ENCODE measurements at regions of chr7 and their contacts with region 1.

Region 1: GRCh38 chr7:140326116-140326928 is 72.0 kb downstream of the SLC37A3 start:
- DNase-seq: peak in 1 of 2 experiments; percentile 67
- H3K4me3 ChIP-seq: no peak overlapping the region
- H3K27ac ChIP-seq: no peak overlapping the region
- H3K4me1 ChIP-seq: no peaks in the 10 kb centered on the region
- H3K27me3 ChIP-seq: no peaks in the 10 kb centered on the region
- CTCF ChIP-seq: peak; percentile 78

Region 2: DNA sequence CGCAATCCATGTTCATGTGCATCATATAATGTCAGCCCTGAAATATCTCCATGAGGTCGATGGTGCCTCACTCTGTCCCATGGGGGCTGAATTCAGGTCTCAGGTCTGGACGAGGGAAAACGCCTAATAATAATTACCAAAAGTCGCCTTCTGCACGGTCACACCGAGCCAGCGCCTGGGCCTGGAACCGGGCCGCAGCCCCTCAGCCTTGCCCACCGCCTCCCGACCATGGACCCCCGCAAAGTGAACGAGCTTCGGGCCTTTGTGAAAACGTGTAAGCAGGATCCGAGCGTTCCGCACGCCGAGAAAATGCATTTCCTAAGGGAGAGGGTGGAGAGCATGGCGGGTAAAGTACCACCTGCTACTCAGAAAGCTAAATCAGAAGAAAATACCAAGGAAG is 824.1 kb before region 1 on chr7:
- CTCF ChIA-PET with region 1: no interaction called
- POLR2A ChIA-PET with region 1: no interaction called
- intact Hi-C with region 1: loop called (anchors 1 kb)
- DNase-seq: no peak
- H3K4me3 ChIP-seq: no peak overlapping the region
- H3K27ac ChIP-seq: no peak overlapping the region
- H3K4me1 ChIP-seq: no peaks in the 10 kb centered on the region
- H3K27me3 ChIP-seq: no peaks in the 10 kb centered on the region
- CTCF ChIP-seq: no peak

Region 3: GRCh38 chr7:139620676-139621344 is 705.5 kb before region 1 on chr7:
- CTCF ChIA-PET with region 1: no interaction called
- POLR2A ChIA-PET with region 1: no interaction called
- intact Hi-C with region 1: loop called (anchors 5 kb)
- DNase-seq: peak; percentile 55 to 65
- H3K4me3 ChIP-seq: no peak overlapping the region
- H3K27ac ChIP-seq: no peak overlapping the region
- H3K4me1 ChIP-seq: no peaks in the 10 kb centered on the region
- H3K27me3 ChIP-seq: no peaks in the 10 kb centered on the region
- CTCF ChIP-seq: peak; percentile 89

Region 4: DNA sequence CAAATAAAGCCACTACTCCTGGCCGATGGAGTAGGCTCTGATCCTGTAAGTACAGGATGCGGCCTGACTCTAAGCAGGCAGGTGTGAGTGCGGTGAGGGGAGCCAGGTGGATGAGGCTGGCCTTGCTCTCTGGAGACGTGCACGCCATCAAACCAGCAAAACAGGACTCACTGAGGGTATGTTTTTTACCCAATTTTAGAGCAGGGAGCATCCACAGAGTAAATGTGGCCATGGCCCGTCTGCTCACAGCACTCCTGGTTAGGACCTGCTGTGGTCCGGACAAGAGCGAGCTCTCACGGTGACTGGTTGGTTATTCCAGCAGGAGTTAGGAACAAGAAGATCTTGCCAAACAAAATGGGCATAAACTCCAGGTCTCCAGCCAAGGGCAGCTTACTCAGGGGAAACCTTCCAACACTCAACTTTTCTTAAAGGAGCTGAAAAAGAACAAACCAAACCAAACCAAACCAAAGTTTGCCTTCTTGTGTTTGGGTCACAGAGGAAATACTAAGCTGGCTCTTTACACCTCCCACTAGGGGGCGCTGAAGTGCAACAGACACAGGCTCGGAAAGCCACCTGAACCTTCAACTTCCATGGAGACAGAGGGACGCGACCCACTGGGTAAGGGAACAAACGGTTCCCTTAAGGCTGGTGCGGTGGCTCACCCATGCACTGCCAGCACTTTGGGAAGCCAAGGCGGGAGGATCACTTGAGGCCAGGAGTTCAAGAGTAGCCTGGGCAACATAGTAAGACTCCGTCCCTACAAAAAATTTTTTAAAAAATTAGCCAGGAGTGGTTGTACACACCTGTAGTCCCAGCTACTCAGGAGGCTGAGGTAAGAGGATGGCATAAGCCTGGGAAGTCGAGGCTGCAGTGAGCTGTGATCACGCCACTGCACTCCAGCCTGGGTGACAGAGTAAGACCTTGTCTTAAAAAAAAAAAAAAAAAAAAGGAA is 680.5 kb before region 1 on chr7:
- CTCF ChIA-PET with region 1: no interaction called
- POLR2A ChIA-PET with region 1: no interaction called
- intact Hi-C with region 1: loop called (anchors 1 kb)
- DNase-seq: peak; percentile 56 to 73
- H3K4me3 ChIP-seq: no peak overlapping the region
- H3K27ac ChIP-seq: no peak overlapping the region
- H3K4me1 ChIP-seq: no peaks in the 10 kb centered on the region
- H3K27me3 ChIP-seq: no peaks in the 10 kb centered on the region
- CTCF ChIP-seq: peak; percentile 98

Region 5: GRCh38 chr7:139777948-139778841 is 548.1 kb before region 1 on chr7 and contains the start of gene HIPK2:
- CTCF ChIA-PET with region 1: no interaction called
- POLR2A ChIA-PET with region 1: no interaction called
- intact Hi-C with region 1: loop called (anchors 10 kb)
- DNase-seq: peak in 1 of 2 experiments; percentile 64
- H3K4me3 ChIP-seq: peak within 1 kb of the TSS; percentile 90
- H3K27ac ChIP-seq: peak within 1 kb of the TSS; percentile 45
- H3K4me1 ChIP-seq: peaks cover 39% of the 10 kb centered on the region
- H3K27me3 ChIP-seq: no peaks in the 10 kb centered on the region
- CTCF ChIP-seq: no peak
- total RNA-seq, gene HIPK2: 23.9 and 35.2 TPM in 2 replicates

Region 6: GRCh38 chr7:140049339-140050024 is 276.8 kb before region 1 on chr7:
- CTCF ChIA-PET with region 1: no interaction called
- POLR2A ChIA-PET with region 1: no interaction called
- intact Hi-C with region 1: no loop called
- DNase-seq: peak in 1 of 2 experiments; percentile 72
- H3K4me3 ChIP-seq: no peak overlapping the region
- H3K27ac ChIP-seq: no peak overlapping the region
- H3K4me1 ChIP-seq: peaks cover 12% of the 10 kb centered on the region
- H3K27me3 ChIP-seq: no peaks in the 10 kb centered on the region
- CTCF ChIP-seq: no peak

Region 7: GRCh38 chr7:140175221-140176121 is 150.9 kb before region 1 on chr7:
- CTCF ChIA-PET with region 1: no interaction called
- POLR2A ChIA-PET with region 1: no interaction called
- intact Hi-C with region 1: loop called (anchors 1 kb)
- DNase-seq: peak; percentile 89 to 95
- H3K4me3 ChIP-seq: peak overlapping the region; percentile 95
- H3K27ac ChIP-seq: peak overlapping the region; percentile 6; the same call in 1 of the 2 replicates
- H3K4me1 ChIP-seq: peaks cover 13% of the 10 kb centered on the region
- H3K27me3 ChIP-seq: no peaks in the 10 kb centered on the region
- CTCF ChIP-seq: peak; percentile 90